Activated CD4-positive, alpha-beta memory T cell treated with anti-CD3 and anti-CD28 coated beads for 36 hours (primary cell): ENCODE measurements at regions of chr11 and their contacts with region 1.

Region 1: GRCh38 chr11:13868710-13869397 is 93.7 kb upstream of the SPON1 start:
- DNase-seq: peak; percentile 18
- H3K4me3 Mint-ChIP-seq: peak overlapping the region; percentile 17
- H3K27ac Mint-ChIP-seq: peak overlapping the region; percentile 85
- H3K4me1 Mint-ChIP-seq: peaks cover 38% of the 10 kb centered on the region
- H3K27me3 Mint-ChIP-seq: no peaks in the 10 kb centered on the region

Region 2: GRCh38 chr11:13928566-13929251 is 59.9 kb after region 1 on chr11:
- CTCF ChIA-PET with region 1: no interaction called
- POLR2A ChIA-PET with region 1: no interaction called
- intact Hi-C with region 1: loop called (anchors 2 kb)
- DNase-seq: no peak
- H3K4me3 Mint-ChIP-seq: no peak overlapping the region
- H3K27ac Mint-ChIP-seq: no peak overlapping the region
- H3K4me1 Mint-ChIP-seq: peaks cover 34% of the 10 kb centered on the region
- H3K27me3 Mint-ChIP-seq: no peaks in the 10 kb centered on the region

Region 3: GRCh38 chr11:14075118-14076078 is 206.5 kb after region 1 on chr11:
- CTCF ChIA-PET with region 1: no interaction called
- POLR2A ChIA-PET with region 1: no interaction called
- intact Hi-C with region 1: loop called (anchors 2 kb)
- DNase-seq: peak; percentile 79
- H3K4me3 Mint-ChIP-seq: peak overlapping the region; percentile 2
- H3K27ac Mint-ChIP-seq: peak overlapping the region; percentile 34
- H3K4me1 Mint-ChIP-seq: peaks cover 46% of the 10 kb centered on the region
- H3K27me3 Mint-ChIP-seq: no peaks in the 10 kb centered on the region